Ascending aorta (tissue), 2 donors: ENCODE measurements at regions of chr3 and their contacts with region 1.

Region 1: DNA sequence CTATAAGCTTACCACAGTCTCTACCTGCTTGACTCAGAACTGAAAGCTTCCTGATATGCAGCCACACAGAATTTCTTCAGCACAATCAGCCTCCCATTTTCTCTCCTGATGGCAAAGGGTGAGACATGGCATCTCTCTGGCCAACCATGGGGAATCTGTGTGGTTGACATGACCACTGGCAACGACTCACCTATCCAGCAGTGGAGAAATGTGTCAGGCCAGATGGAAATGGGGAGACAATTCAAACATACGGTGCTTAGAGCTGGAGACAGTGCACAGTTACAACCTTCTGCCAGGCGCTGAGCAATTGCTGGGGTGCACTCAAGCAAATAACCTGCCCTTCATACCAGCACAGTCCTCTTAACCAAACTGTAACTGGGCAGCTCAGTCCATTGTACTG is 3.6 kb downstream of the ZNF385D start:
- DNase-seq: no peak
- H3K4me3 ChIP-seq: peak overlapping the region; percentile 66 to 75
- H3K27ac ChIP-seq: peak overlapping the region; percentile 78 to 85
- H3K4me1 ChIP-seq: peaks cover 0 to 12% of the 10 kb centered on the region in 2 donors
- H3K27me3 ChIP-seq: no peaks in the 10 kb centered on the region
- CTCF ChIP-seq: no peak

Region 2: GRCh38 chr3:20739814-20740213 is 1007.6 kb before region 1 on chr3:
- intact Hi-C with region 1: no loop called
- DNase-seq: no peak
- H3K4me3 ChIP-seq: no peak overlapping the region
- H3K27ac ChIP-seq: no peak overlapping the region
- H3K4me1 ChIP-seq: no peaks in the 10 kb centered on the region
- H3K27me3 ChIP-seq: no peaks in the 10 kb centered on the region
- CTCF ChIP-seq: no peak

Region 3: GRCh38 chr3:21447476-21448151 is 299.8 kb before region 1 on chr3:
- intact Hi-C with region 1: loop called (anchors 10 kb)
- DNase-seq: no peak
- H3K4me3 ChIP-seq: no peak overlapping the region
- H3K27ac ChIP-seq: no peak overlapping the region
- H3K4me1 ChIP-seq: peaks cover 0 to 17% of the 10 kb centered on the region in 2 donors
- H3K27me3 ChIP-seq: no peaks in the 10 kb centered on the region
- CTCF ChIP-seq: no peak

Region 4: DNA sequence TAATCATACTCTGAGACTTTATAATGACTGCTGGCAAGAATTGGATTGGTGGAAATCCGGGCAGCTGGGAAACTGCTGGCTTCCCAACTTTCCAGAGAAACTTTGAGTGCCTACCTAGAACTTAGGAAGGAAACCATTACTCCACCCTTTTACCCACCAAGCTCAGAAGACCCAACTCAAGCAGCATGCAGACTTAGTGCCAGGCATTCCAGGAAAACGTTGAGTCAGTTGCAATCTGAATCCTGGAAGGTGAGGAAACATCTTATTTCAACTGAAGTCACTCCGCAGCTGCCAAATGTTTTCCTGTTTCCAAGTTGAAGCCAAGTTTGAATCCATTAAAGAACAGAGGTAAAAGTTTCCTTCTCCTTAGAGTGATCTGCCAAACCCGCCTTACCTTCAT is 122.9 kb before region 1 on chr3:
- intact Hi-C with region 1: no loop called
- DNase-seq: peak in 1 of 2 donors; percentile 64
- H3K4me3 ChIP-seq: no peak overlapping the region
- H3K27ac ChIP-seq: no peak overlapping the region
- H3K4me1 ChIP-seq: peaks cover 0 to 7% of the 10 kb centered on the region in 2 donors
- H3K27me3 ChIP-seq: no peaks in the 10 kb centered on the region
- CTCF ChIP-seq: no peak

Region 5: GRCh38 chr3:21645121-21645897 is 102.1 kb before region 1 on chr3:
- intact Hi-C with region 1: loop called (anchors 5 kb)
- DNase-seq: peak; percentile 31 to 86
- H3K4me3 ChIP-seq: peak overlapping the region in 1 of 2 donors; percentile 43
- H3K27ac ChIP-seq: peak overlapping the region; percentile 80 to 85
- H3K4me1 ChIP-seq: peaks cover 2 to 17% of the 10 kb centered on the region in 2 donors
- H3K27me3 ChIP-seq: no peaks in the 10 kb centered on the region
- CTCF ChIP-seq: no peak

Region 6: DNA sequence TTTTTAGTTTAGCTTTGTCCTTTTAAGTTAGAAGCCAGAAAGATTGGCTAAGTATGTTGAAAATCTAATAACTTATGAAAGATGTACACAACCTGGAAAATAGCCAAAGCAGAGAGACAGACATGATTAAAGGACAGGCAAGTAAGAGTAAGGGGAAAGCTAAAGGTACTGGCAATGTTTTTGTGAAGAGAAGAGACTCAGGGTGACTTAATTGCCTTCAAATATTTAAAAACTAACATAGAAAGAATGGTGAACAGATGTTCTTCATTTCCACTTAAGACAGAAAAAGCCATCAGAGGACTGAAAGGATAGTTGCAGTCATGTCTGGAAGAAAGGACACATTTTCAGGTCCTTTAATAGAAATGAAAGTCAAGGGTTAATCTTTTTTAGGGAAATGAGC is 65.2 kb before region 1 on chr3:
- intact Hi-C with region 1: loop called (anchors 10 kb)
- DNase-seq: no peak
- H3K4me3 ChIP-seq: no peak overlapping the region
- H3K27ac ChIP-seq: peak overlapping the region; percentile 35 to 59
- H3K4me1 ChIP-seq: peaks cover 4 to 36% of the 10 kb centered on the region in 2 donors
- H3K27me3 ChIP-seq: no peaks in the 10 kb centered on the region
- CTCF ChIP-seq: no peak

Region 7: GRCh38 chr3:21705769-21706168 is 41.6 kb before region 1 on chr3:
- intact Hi-C with region 1: loop called (anchors 5 kb)
- DNase-seq: peak; percentile 69 to 91
- H3K4me3 ChIP-seq: no peak overlapping the region
- H3K27ac ChIP-seq: peak overlapping the region; percentile 69 to 70
- H3K4me1 ChIP-seq: peaks cover 6 to 19% of the 10 kb centered on the region in 2 donors
- H3K27me3 ChIP-seq: no peaks in the 10 kb centered on the region
- CTCF ChIP-seq: no peak

Region 8: GRCh38 chr3:21718161-21718765 is 29.1 kb before region 1 on chr3:
- intact Hi-C with region 1: loop called (anchors 2 kb)
- DNase-seq: peak in 1 of 2 donors; percentile 83
- H3K4me3 ChIP-seq: no peak overlapping the region
- H3K27ac ChIP-seq: peak overlapping the region; percentile 80 to 85
- H3K4me1 ChIP-seq: peaks cover 8 to 35% of the 10 kb centered on the region in 2 donors
- H3K27me3 ChIP-seq: no peaks in the 10 kb centered on the region
- CTCF ChIP-seq: no peak